GM23248 (cell line): ENCODE measurements at regions of chr20 and their contacts with region 1.

Region 1: GRCh38 chr20:6074145-6074561 is 20.3 kb upstream of the LRRN4 start:
- DNase-seq: no peak
- H3K4me3 ChIP-seq: no peak overlapping the region
- H3K27ac ChIP-seq: no peak overlapping the region
- H3K4me1 ChIP-seq: no peaks in the 10 kb centered on the region
- H3K27me3 ChIP-seq: no peaks in the 10 kb centered on the region

Region 2: DNA sequence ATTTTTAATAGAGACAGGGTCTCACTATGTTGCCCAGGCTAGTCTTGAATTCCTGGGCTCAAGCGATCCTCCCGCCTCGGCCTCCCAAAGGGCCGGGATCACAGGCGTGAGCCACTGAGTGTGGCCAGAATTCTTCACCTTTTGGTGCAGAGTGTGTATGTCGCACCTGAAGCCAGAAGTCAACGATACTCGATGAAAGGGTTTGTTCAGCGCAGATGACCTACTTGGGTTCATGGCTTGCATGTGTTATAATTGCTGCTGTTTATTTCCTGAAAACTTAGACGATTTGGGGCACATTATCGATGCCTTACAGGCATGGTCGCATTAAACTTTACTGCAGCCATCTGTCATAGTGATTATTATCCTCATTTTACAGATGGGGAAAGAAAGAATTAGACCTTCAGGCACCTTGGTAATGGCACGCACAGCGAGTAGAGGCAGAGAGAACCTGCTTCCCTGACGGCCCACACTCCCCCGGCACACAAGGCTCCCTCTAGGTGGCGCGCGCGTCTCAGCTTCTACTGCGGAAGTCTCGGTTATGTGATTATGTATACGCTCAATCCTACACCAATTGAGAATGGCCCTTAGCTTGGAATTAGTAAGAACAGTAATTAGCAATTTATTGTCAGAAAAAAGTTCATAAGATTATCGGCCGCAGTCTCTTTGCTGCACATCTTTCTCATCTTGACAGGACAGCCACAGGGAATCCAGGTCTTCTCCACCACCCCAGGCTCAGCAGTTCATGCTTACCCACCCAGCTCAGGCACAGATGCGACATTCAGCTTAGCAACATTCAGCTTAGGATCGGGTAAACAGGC is 544.6 kb before region 1 on chr20:
- in situ Hi-C with region 1: loop called (anchors 10 kb)
- DNase-seq: peak; percentile 92
- H3K4me3 ChIP-seq: peak overlapping the region; percentile 20; the same call in 1 of the 2 replicates
- H3K27ac ChIP-seq: no peak overlapping the region
- H3K4me1 ChIP-seq: peaks cover 16% of the 10 kb centered on the region
- H3K27me3 ChIP-seq: no peaks in the 10 kb centered on the region

Region 3: DNA sequence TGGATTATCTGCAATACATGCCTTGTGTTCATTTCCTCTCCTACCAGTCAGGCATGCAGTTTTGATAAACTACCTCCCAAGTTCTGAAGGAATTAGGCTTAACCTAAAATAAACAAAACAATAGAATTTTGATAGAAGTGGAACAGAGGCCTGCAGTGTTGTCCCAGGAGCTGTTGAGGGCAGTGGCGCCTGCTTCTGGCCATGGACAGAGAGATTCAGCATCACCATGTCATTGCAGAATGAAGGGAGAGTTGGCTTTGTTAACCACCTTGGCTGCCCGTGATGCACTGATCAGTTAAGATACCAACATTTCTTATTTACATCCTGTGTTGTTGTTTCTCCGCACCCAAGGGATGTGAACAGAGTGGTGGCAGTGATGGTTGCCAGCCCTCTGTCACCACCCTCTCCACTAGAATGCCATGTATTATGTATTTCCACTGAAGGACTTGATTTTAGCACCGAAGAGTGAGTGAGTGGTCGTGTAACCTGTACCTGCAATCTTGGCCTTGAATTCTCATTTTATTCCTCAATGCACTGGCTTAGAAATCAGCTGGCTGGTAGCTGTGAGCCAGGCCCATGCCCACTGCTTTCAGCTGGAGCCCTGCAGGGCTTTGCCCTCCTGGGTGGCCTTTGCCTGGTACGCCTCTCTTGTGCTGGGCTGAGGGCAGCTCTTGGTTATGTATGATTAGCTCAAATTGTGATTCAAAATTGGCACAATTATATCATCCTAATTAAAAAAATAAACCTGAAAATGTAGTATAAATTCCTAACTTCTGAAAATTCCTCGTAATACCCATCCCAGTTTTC is 267.5 kb before region 1 on chr20:
- in situ Hi-C with region 1: loop called (anchors 25 kb)
- DNase-seq: no peak
- H3K4me3 ChIP-seq: no peak overlapping the region
- H3K27ac ChIP-seq: no peak overlapping the region
- H3K4me1 ChIP-seq: no peaks in the 10 kb centered on the region
- H3K27me3 ChIP-seq: no peaks in the 10 kb centered on the region